ENCODE measurements at regions of chr16 and their contacts with region 1.

Region 1: GRCh38 chr16:31179747-31180459 is at the start of gene FUS:
- DNase-seq: peak; percentile 97
- H3K4me3 Mint-ChIP-seq: peak within 1 kb of the TSS; percentile 100
- H3K27ac Mint-ChIP-seq: peak within 1 kb of the TSS; percentile 98
- H3K4me1 Mint-ChIP-seq: peaks cover 53% of the 10 kb centered on the region
- H3K27me3 Mint-ChIP-seq: peaks cover 2% of the 10 kb centered on the region
- total RNA-seq, gene FUS: 936 and 955 TPM in 2 replicates

Region 2: GRCh38 chr16:31032736-31033708 is 146.9 kb before region 1 on chr16 and contains the start of gene STX4:
- intact Hi-C with region 1: loop called (anchors 1 kb)
- DNase-seq: peak; percentile 99
- H3K4me3 Mint-ChIP-seq: peak within 1 kb of the TSS; percentile 93
- H3K27ac Mint-ChIP-seq: peak within 1 kb of the TSS; percentile 96
- H3K4me1 Mint-ChIP-seq: peaks cover 15% of the 10 kb centered on the region
- H3K27me3 Mint-ChIP-seq: no peaks in the 10 kb centered on the region
- total RNA-seq, gene STX4: 49.1 and 54.8 TPM in 2 replicates

Region 3: DNA sequence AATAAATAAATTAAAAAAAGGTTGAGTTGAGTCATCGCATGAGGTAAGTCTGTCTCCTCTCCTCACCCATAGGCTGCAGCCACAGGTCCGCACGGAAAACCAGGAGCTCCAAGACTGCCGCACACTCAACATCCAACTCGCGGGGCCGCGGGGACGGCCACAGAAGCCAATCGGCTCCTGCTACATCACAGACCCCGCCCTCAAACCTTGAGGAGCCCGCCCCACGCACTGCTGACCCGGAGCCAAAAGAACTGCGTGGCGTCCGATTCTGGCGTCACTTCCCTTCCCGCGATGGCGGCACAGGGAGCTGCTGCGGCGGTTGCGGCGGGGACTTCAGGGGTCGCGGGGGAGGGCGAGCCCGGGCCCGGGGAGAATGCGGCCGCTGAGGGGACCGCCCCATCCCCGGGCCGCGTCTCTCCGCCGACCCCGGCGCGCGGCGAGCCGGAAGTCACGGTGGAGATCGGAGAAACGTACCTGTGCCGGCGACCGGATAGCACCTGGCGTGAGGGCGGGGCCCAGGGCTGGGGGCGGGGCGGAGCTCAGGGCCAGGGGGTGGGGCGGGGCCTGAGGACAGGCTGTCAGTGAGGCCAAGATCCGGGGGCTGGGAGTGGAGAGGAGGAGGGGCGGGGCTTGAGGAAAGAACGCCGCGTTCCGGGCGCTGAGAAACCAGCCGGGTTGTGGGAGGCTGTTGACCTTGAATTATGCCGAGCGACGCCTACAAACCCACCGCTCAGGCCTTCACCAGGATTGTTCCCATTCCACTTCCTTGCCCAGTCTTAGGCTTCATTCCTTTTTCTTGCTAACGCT is 62.3 kb before region 1 on chr16 and contains the start of gene KAT8:
- intact Hi-C with region 1: loop called (anchors 2 kb)
- DNase-seq: peak; percentile 99
- H3K4me3 Mint-ChIP-seq: peak within 1 kb of the TSS; percentile 88
- H3K27ac Mint-ChIP-seq: peak within 1 kb of the TSS; percentile 89
- H3K4me1 Mint-ChIP-seq: peaks cover 11% of the 10 kb centered on the region
- H3K27me3 Mint-ChIP-seq: no peaks in the 10 kb centered on the region
- total RNA-seq, gene KAT8: 56.9 and 63.3 TPM in 2 replicates

Region 4: DNA sequence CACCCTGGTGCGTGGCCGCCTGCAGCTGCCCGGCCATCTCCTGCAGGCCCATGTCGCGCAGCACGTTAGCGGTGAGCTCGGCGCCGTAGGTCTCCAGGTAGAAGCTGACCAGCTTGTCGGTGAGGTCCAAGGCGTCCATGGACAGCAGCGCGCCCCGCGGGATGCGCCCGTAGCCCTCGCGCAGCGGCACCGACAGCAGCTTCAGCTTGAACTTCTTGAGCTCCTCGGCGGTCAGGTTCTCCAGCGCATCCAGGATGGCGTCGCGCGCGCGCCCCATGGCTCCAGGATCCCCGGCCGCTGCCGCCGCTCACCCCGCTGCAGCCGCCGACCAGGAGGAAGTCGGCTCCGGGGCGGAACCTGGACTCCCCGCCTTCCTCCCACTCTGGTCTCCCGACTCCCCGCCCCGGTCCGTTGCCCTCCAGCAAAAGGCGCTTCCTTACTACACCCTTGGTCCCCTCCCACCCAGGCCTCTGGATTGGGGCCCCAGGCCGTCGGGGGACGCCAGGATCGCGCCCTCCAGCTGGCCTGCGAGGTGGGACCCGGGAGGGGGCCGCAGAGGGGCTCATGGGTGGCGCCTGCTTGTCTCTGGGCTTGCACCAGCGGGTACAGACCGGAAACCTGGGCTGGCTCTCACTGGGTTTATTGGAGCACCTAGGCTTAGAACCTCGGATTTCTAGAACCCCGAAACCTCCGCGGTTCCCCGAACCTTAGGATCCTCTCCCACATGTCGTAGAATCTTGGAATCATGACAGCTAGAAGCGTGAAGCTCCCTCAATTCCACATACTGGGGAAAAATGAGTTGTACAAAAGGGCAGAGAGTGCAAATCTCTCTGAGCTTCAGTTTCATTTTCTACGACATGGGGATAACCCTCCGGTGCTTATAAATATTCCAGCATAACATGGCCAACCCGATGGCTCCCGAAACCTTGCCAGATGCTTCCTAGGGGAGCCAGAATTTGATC is 22.8 kb after region 1 on chr16 and contains the start of gene PYCARD:
- intact Hi-C with region 1: loop called (anchors 2 kb)
- DNase-seq: peak; percentile 86
- H3K4me3 Mint-ChIP-seq: peak within 1 kb of the TSS; percentile 89
- H3K27ac Mint-ChIP-seq: peak within 1 kb of the TSS; percentile 87
- H3K4me1 Mint-ChIP-seq: peaks cover 54% of the 10 kb centered on the region
- H3K27me3 Mint-ChIP-seq: peaks cover 1% of the 10 kb centered on the region
- total RNA-seq, gene PYCARD: 15.6 and 17.1 TPM in 2 replicates

Region 5: DNA sequence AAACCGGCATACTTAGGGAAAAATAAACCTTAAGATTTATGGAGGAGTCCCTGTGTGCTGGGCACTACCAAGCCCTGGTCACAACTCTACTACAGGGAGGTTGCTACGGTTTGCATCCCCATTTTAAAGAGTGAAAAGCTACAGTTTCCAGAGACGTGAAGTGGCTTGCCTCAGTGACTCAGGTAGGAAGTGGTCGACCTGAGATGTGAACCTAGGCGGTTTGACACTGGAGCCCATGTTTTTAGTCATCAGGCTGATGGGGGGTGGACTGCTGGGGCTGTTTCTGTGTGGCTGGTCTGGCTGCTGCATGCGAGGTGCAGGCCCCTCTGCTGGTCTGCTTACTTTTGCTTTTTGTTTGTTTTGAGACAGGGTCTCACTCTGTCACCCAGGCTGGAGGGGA is 241.7 kb after region 1 on chr16:
- intact Hi-C with region 1: loop called (anchors 1 kb)
- DNase-seq: peak; percentile 87
- H3K4me3 Mint-ChIP-seq: peak overlapping the region; percentile 58
- H3K27ac Mint-ChIP-seq: peak overlapping the region; percentile 83
- H3K4me1 Mint-ChIP-seq: peaks cover 40% of the 10 kb centered on the region
- H3K27me3 Mint-ChIP-seq: no peaks in the 10 kb centered on the region

Region 6: GRCh38 chr16:31873556-31874365 is 693.9 kb after region 1 on chr16 and contains the start of gene ZNF267:
- intact Hi-C with region 1: loop called (anchors 1 kb)
- DNase-seq: peak; percentile 98
- H3K4me3 Mint-ChIP-seq: peak within 1 kb of the TSS; percentile 90
- H3K27ac Mint-ChIP-seq: peak within 1 kb of the TSS; percentile 94
- H3K4me1 Mint-ChIP-seq: peaks cover 66% of the 10 kb centered on the region
- H3K27me3 Mint-ChIP-seq: no peaks in the 10 kb centered on the region
- total RNA-seq, gene ZNF267: 77.7 and 78.3 TPM in 2 replicates